Ascending aorta (tissue), 2 donors: ENCODE measurements at regions of chr6 and their contacts with region 1.

Region 1: GRCh38 chr6:43427406-43428111 is at the start of gene ABCC10:
- DNase-seq: peak; percentile 72 to 96
- H3K4me3 ChIP-seq: peak within 1 kb of the TSS; percentile 79 to 89
- H3K27ac ChIP-seq: peak within 1 kb of the TSS; percentile 80 to 87
- H3K4me1 ChIP-seq: peaks cover 3 to 17% of the 10 kb centered on the region in 2 donors
- H3K27me3 ChIP-seq: no peaks in the 10 kb centered on the region
- CTCF ChIP-seq: peak in 2 of 3 experiments; percentile 40 to 44
- total RNA-seq, gene ABCC10: 4.6 TPM

Region 2: GRCh38 chr6:43334466-43335095 is 93.0 kb before region 1 on chr6:
- intact Hi-C with region 1: no loop called
- DNase-seq: no peak
- H3K4me3 ChIP-seq: no peak overlapping the region
- H3K27ac ChIP-seq: no peak overlapping the region
- H3K4me1 ChIP-seq: no peaks in the 10 kb centered on the region
- H3K27me3 ChIP-seq: no peaks in the 10 kb centered on the region
- CTCF ChIP-seq: peak in 2 of 3 experiments; percentile 29 to 37

Region 3: GRCh38 chr6:43369174-43370022 is 58.2 kb before region 1 on chr6 and contains the start of gene ZNF318:
- intact Hi-C with region 1: loop called (anchors 1 kb)
- DNase-seq: peak; percentile 85 to 97
- H3K4me3 ChIP-seq: peak within 1 kb of the TSS; percentile 83 to 97
- H3K27ac ChIP-seq: peak within 1 kb of the TSS; percentile 80 to 88
- H3K4me1 ChIP-seq: peaks cover 3 to 14% of the 10 kb centered on the region in 2 donors
- H3K27me3 ChIP-seq: no peaks in the 10 kb centered on the region
- CTCF ChIP-seq: no peak
- total RNA-seq, gene ZNF318: 4.4 TPM

Region 4: GRCh38 chr6:43477235-43478007 is 49.9 kb after region 1 on chr6 and contains the start of gene TJAP1:
- intact Hi-C with region 1: loop called (anchors 1 kb)
- DNase-seq: peak; percentile 70 to 95
- H3K4me3 ChIP-seq: peak within 1 kb of the TSS; percentile 65 to 99
- H3K27ac ChIP-seq: peak within 1 kb of the TSS; percentile 37 to 76
- H3K4me1 ChIP-seq: peaks cover 10 to 11% of the 10 kb centered on the region in 2 donors
- H3K27me3 ChIP-seq: no peaks in the 10 kb centered on the region
- CTCF ChIP-seq: no peak
- total RNA-seq, gene TJAP1: 71.6 TPM